ENCODE measurements at regions of chr11 and their contacts with region 1.

Region 1: GRCh38 chr11:69817265-69818230 is 1.7 kb downstream of the FGF3 start:
- DNase-seq: no peak
- ATAC-seq: no peak
- H3K4me3 ChIP-seq: no peak overlapping the region
- H3K4me3 Mint-ChIP-seq: no peak overlapping the region
- H3K27ac ChIP-seq: no peak overlapping the region
- H3K27ac Mint-ChIP-seq: no peak overlapping the region
- H3K4me1 ChIP-seq: no peaks in the 10 kb centered on the region
- H3K4me1 Mint-ChIP-seq: no peaks in the 10 kb centered on the region
- H3K27me3 ChIP-seq: no peaks in the 10 kb centered on the region
- H3K27me3 Mint-ChIP-seq: peaks cover 30% of the 10 kb centered on the region
- CTCF ChIP-seq: no peak

Region 2: GRCh38 chr11:69620683-69621290 is 196.8 kb before region 1 on chr11:
- CTCF ChIA-PET with region 1: no interaction called
- POLR2A ChIA-PET with region 1: no interaction called
- intact Hi-C with region 1: no loop called
- DNase-seq: no peak
- ATAC-seq: no peak
- H3K4me3 ChIP-seq: no peak overlapping the region
- H3K4me3 Mint-ChIP-seq: no peak overlapping the region
- H3K27ac ChIP-seq: no peak overlapping the region
- H3K27ac Mint-ChIP-seq: no peak overlapping the region
- H3K4me1 ChIP-seq: no peaks in the 10 kb centered on the region
- H3K4me1 Mint-ChIP-seq: no peaks in the 10 kb centered on the region
- H3K27me3 ChIP-seq: peaks cover 0 to 2% of the 10 kb centered on the region in 2 experiments
- H3K27me3 Mint-ChIP-seq: peaks cover 23% of the 10 kb centered on the region
- CTCF ChIP-seq: no peak

Region 3: GRCh38 chr11:69744435-69744834 is 73.1 kb before region 1 on chr11:
- CTCF ChIA-PET with region 1: no interaction called
- POLR2A ChIA-PET with region 1: no interaction called
- intact Hi-C with region 1: loop called in 1 of 2 experiments (anchors 2 kb)
- DNase-seq: no peak
- ATAC-seq: no peak
- H3K4me3 ChIP-seq: no peak overlapping the region
- H3K4me3 Mint-ChIP-seq: no peak overlapping the region
- H3K27ac ChIP-seq: no peak overlapping the region
- H3K27ac Mint-ChIP-seq: no peak overlapping the region
- H3K4me1 ChIP-seq: no peaks in the 10 kb centered on the region
- H3K4me1 Mint-ChIP-seq: no peaks in the 10 kb centered on the region
- H3K27me3 ChIP-seq: no peaks in the 10 kb centered on the region
- H3K27me3 Mint-ChIP-seq: peaks cover 13% of the 10 kb centered on the region
- CTCF ChIP-seq: no peak

Region 4: GRCh38 chr11:69881449-69882269 is 64.1 kb after region 1 on chr11:
- CTCF ChIA-PET with region 1: no interaction called
- POLR2A ChIA-PET with region 1: no interaction called
- intact Hi-C with region 1: no loop called
- DNase-seq: no peak
- ATAC-seq: no peak
- H3K4me3 ChIP-seq: no peak overlapping the region
- H3K4me3 Mint-ChIP-seq: no peak overlapping the region
- H3K27ac ChIP-seq: no peak overlapping the region
- H3K27ac Mint-ChIP-seq: no peak overlapping the region
- H3K4me1 ChIP-seq: no peaks in the 10 kb centered on the region
- H3K4me1 Mint-ChIP-seq: no peaks in the 10 kb centered on the region
- H3K27me3 ChIP-seq: no peaks in the 10 kb centered on the region
- H3K27me3 Mint-ChIP-seq: peaks cover 9% of the 10 kb centered on the region
- CTCF ChIP-seq: no peak